ENCODE measurements at regions of chr7 and their contacts with region 1.

Region 1: GRCh38 chr7:116284390-116284789 is 74.1 kb downstream of the TES start:
- DNase-seq: no peak
- ATAC-seq: no peak
- H3K4me3 ChIP-seq: no peak overlapping the region
- H3K27ac ChIP-seq: no peak overlapping the region
- H3K4me1 ChIP-seq: peaks cover 0 to 15% (median under 1%) of the 10 kb centered on the region in 12 donors
- H3K27me3 ChIP-seq: no peaks in the 10 kb centered on the region
- CTCF ChIP-seq: no peak
- POLR2A ChIP-seq: no peak

Region 2: DNA sequence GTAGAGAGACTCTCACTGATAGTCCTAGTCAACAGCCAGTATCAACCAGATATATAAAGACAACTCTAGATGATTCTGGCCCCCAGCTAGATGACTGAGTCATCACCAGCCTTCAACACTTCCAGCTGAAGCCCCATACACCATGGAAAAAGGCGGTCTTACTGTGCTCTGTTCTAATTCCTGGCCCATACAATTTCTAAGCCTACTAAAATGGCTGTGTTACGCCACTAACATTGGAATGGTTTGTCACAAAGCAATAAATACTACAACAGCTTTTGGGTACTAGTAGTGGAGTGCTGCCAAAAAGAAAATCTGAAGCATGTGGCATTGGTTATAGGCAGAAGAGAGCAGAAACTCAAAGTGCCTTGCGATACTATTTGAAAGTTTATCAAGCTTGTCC is 87.0 kb before region 1 on chr7:
- intact Hi-C with region 1: no loop called
- DNase-seq: no peak
- ATAC-seq: no peak
- H3K4me3 ChIP-seq: no peak overlapping the region
- H3K27ac ChIP-seq: no peak overlapping the region
- H3K4me1 ChIP-seq: no peaks in the 10 kb centered on the region
- H3K27me3 ChIP-seq: no peaks in the 10 kb centered on the region
- CTCF ChIP-seq: no peak
- POLR2A ChIP-seq: no peak

Region 3: DNA sequence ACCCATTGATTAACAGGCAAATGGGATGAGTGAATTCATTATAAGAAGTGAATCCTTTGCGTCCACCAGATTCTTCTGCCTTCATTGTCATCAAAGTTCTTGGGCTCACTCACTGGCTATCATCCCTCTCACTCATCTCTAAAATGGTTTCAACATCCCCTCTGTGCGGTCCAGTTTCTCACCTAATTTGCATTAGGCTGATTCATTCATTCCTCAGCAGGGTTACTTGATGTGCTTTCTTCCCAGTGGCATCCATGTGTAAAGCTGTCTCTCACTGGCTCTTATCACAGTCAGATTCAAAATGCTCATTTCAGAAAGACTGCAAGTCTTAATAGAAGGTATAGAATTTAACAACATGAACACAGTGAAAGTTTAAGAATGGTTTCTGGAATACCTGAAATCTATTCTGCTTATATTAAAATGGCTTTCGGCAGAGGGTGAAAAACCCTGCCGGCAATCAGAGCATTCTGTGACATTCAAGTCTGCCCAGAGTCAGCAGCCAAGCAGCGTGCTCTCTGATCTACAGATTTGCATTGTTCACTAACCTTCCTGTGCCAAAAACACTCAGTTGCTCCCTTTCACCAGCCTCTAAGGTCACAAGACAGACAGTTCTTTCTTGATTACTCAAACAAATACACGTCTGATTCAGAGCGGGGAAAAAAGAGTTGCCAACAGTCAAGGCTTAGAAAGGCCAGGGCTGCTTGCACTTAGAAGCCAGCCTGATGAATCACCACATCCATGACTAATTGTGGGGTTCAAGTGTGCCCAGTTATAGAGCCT is 32.6 kb after region 1 on chr7:
- intact Hi-C with region 1: loop called in 4 of 10 experiments (anchors 5 kb)
- DNase-seq: peak; percentile 25 to 69 (median 40)
- ATAC-seq: peak; percentile 87 to 95 (median 92)
- H3K4me3 ChIP-seq: peak overlapping the region in 3 of 12 donors; percentile 2 to 23 (median 6)
- H3K27ac ChIP-seq: peak overlapping the region; percentile 41 to 81 (median 68)
- H3K4me1 ChIP-seq: peaks cover 0 to 23% (median 14%) of the 10 kb centered on the region in 12 donors
- H3K27me3 ChIP-seq: no peaks in the 10 kb centered on the region
- CTCF ChIP-seq: no peak
- POLR2A ChIP-seq: no peak

Region 4: GRCh38 chr7:116327752-116328151 is 43.4 kb after region 1 on chr7:
- intact Hi-C with region 1: loop called in 1 of 10 experiments (anchors 10 kb)
- DNase-seq: no peak
- ATAC-seq: no peak
- H3K4me3 ChIP-seq: no peak overlapping the region
- H3K27ac ChIP-seq: peak overlapping the region in 4 of 12 donors; percentile 3 to 59 (median 20)
- H3K4me1 ChIP-seq: peaks cover 0 to 49% (median 16%) of the 10 kb centered on the region in 12 donors
- H3K27me3 ChIP-seq: no peaks in the 10 kb centered on the region
- CTCF ChIP-seq: no peak
- POLR2A ChIP-seq: no peak

Region 5: DNA sequence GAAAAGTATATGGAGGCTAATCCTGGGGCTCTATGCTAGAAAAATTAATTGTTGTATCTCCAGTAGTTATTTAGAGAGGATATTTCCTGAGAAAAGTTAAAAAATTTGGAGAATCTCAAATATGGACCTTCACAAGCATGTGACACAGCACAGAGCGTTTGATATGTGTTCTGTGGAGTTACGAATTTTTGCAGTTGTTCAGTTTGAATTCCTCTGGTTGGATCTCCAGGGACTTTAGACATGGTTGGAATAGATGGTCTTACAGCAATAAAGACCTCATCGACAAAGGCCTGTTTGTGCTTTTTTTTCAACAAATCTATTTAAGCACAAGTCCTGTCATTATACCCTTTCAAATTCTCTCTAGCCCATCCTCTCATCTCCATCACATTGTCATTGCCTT is 63.9 kb after region 1 on chr7:
- intact Hi-C with region 1: loop called in 3 of 10 experiments (anchors 5 to 10 kb)
- DNase-seq: no peak
- ATAC-seq: no peak
- H3K4me3 ChIP-seq: no peak overlapping the region
- H3K27ac ChIP-seq: no peak overlapping the region
- H3K4me1 ChIP-seq: peaks cover 0 to 12% (median 4%) of the 10 kb centered on the region in 12 donors
- H3K27me3 ChIP-seq: no peaks in the 10 kb centered on the region
- CTCF ChIP-seq: no peak
- POLR2A ChIP-seq: no peak

Measured in heart left ventricle (tissue), 16 donors.